ENCODE measurements at regions of chr2 and their contacts with region 1.

Region 1: DNA sequence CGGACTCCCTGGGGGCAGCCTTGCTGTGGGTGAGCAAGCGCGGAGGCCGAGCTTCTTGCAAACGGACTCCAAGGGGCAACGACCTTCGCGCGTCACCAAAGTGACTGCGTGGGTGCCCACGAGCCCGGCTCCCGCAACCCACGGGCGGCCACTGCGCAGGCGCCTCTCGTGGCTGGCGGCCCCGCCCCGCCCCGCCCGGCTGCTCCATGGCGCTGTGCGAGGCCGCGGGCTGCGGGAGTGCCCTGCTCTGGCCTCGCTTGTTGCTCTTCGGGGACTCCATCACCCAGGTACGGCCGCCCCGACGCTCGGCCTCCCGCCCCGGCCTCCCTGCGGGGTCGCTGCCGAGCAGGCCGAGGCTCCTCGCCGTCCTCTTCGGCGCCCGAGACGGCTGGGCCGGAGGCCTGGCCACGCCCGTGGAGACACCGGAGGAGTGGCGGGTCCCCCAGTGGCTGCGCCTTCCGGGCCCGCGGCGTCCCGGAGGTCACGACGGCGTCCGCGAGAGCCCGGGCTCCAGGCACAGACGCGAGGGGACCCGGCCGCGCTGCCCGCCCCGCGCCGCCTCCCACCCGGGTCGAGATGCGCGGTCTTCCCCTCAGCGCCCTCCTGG is at the start of gene IAH1:
- DNase-seq: peak in 8 of 9 donors; percentile 66 to 81 (median 78)
- ATAC-seq: peak; percentile 89
- H3K4me3 ChIP-seq: peak within 1 kb of the TSS; percentile 82
- H3K4me3 Mint-ChIP-seq: peak within 1 kb of the TSS; percentile 81 to 89 (median 84)
- H3K27ac ChIP-seq: peak within 1 kb of the TSS; percentile 95
- H3K27ac Mint-ChIP-seq: peak within 1 kb of the TSS; percentile 83 to 95 (median 88)
- H3K4me1 ChIP-seq: peaks cover 11 to 21% of the 10 kb centered on the region in 2 donors
- H3K4me1 Mint-ChIP-seq: peaks cover 20 to 53% (median 45%) of the 10 kb centered on the region in 7 donors
- H3K27me3 ChIP-seq: no peaks in the 10 kb centered on the region
- H3K27me3 Mint-ChIP-seq: no peaks in the 10 kb centered on the region
- total RNA-seq, gene IAH1: 43.9 to 62.7 (median 49.7) TPM

Region 2: DNA sequence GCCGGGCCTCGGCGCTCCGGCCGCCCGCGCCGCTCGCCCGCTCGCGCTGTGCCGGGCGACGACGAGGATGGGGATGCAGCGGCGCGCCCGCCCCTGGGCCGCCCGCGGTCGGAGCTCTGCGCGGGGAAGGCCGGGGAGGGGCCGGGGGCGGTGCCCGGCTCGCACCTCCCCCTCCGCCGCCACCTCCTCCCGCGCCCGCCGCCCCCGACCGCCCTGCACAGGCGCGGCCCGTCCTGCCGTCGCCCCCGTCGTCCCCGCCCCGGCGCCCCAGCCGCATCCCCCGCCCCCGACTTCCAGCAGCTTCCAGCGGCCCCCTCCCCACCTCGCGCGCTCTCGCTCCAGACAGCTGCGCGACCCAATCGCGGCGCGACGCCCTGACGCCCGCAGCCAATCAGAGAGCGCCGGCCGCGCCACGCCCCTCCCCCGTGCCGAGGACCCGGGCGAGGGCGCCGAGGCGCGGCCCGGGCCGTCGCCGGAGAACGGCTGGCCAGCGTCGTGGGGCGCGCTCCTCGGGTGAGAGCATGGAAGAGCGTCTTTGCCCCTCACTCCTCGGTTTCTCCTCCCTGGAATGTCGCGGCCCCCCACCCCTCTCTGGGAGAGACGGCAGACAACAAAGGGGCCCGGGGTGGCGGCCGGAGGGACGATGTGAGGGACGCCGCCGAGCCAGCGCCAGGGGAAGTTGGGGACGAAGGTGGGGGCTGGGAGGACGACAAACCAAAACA is 470.7 kb before region 1 on chr2 and contains the start of gene MBOAT2:
- CTCF ChIA-PET with region 1: no interaction called
- POLR2A ChIA-PET with region 1: no interaction called
- intact Hi-C with region 1: loop called in 1 of 2 experiments (anchors 5 kb)
- DNase-seq: peak; percentile 60 to 84 (median 71)
- ATAC-seq: peak; percentile 92
- H3K4me3 ChIP-seq: peak within 1 kb of the TSS; percentile 60
- H3K4me3 Mint-ChIP-seq: peak within 1 kb of the TSS; percentile 77 to 92 (median 86)
- H3K27ac ChIP-seq: peak within 1 kb of the TSS; percentile 62
- H3K27ac Mint-ChIP-seq: peak within 1 kb of the TSS in 8 of 9 donors; percentile 56 to 86 (median 76)
- H3K4me1 ChIP-seq: peaks cover 0 to 3% of the 10 kb centered on the region in 2 donors
- H3K4me1 Mint-ChIP-seq: peaks cover 13 to 25% (median 22%) of the 10 kb centered on the region in 7 donors
- H3K27me3 ChIP-seq: peaks cover 0 to 3% of the 10 kb centered on the region in 2 donors
- H3K27me3 Mint-ChIP-seq: peaks cover 0 to 18% (median 4%) of the 10 kb centered on the region in 5 donors
- total RNA-seq, gene MBOAT2: 1.4 to 6.0 (median 2.3) TPM

Region 3: DNA sequence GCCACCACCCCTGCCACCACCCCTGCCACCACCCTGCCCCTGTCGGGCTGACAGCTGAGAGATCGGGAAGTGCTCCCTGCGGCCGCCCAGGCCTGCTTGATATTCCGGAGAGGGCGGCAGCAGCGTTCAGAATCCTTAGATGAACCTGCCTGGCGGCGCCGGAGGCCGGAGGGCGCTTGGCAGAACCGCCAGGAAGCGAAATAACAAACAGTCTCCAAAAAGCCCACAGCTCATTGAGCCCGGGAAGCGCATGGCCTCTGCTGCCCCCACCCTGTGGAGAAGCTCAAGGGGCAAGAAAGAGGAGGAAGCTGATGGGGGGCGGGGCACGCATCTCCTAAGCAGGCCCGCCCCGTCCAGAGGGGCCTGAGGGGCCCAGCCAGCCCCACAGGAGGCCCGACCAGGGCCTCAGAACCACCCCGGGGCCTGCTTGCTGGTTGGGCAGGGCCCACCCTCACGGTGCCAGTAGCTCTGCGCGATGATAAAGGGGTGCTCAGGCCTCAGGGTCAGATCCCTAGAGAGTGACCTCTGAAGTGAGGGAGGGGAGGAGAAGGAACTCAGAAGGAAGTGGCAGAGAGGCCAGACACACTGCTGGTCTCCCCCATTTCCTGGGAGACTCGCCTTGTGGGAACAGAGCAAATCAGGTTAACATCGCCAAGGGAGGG is 378.6 kb before region 1 on chr2:
- CTCF ChIA-PET with region 1: no interaction called
- POLR2A ChIA-PET with region 1: no interaction called
- intact Hi-C with region 1: no loop called
- DNase-seq: no peak
- ATAC-seq: peak; percentile 54
- H3K4me3 ChIP-seq: no peak overlapping the region
- H3K4me3 Mint-ChIP-seq: peak overlapping the region in 1 of 10 donors; percentile 38
- H3K27ac ChIP-seq: no peak overlapping the region
- H3K27ac Mint-ChIP-seq: no peak overlapping the region
- H3K4me1 ChIP-seq: no peaks in the 10 kb centered on the region
- H3K4me1 Mint-ChIP-seq: peaks cover 0 to 15% (median 9%) of the 10 kb centered on the region in 7 donors
- H3K27me3 ChIP-seq: no peaks in the 10 kb centered on the region
- H3K27me3 Mint-ChIP-seq: peaks cover 17 to 40% (median 35%) of the 10 kb centered on the region in 5 donors

Region 4: DNA sequence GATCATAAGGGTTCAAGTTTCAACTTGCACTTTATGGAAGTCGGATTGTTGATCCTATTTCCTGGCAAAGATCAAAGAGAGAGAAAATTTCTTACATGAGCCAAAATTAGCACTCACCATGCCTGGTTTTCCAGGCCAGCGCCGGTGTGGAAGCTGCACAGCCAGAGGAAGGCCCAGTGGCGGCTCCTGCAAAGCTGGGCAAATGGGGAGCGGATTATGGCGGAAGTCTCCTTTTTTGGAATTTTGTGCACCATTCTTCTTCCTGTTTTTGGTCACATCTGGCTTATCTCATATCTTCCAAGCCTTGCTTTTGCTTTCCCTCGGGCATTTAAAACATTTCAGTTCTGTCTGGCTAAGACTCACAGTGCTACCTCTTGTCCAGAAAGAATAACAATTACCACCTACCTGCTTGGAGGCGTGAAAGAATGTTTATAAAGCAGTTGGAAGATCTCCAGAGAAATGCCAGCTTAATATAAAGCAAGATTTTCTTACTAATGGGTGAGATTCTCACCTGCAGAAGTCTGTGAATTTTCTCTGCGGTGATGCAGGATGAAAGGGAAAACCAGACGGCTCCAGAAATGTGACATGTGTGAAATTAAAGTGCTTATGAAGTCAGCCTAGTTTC is 173.5 kb before region 1 on chr2:
- CTCF ChIA-PET with region 1: no interaction called
- POLR2A ChIA-PET with region 1: no interaction called
- intact Hi-C with region 1: no loop called
- DNase-seq: no peak
- ATAC-seq: no peak
- H3K4me3 ChIP-seq: no peak overlapping the region
- H3K4me3 Mint-ChIP-seq: no peak overlapping the region
- H3K27ac ChIP-seq: no peak overlapping the region
- H3K27ac Mint-ChIP-seq: no peak overlapping the region
- H3K4me1 ChIP-seq: no peaks in the 10 kb centered on the region
- H3K4me1 Mint-ChIP-seq: no peaks in the 10 kb centered on the region
- H3K27me3 ChIP-seq: no peaks in the 10 kb centered on the region
- H3K27me3 Mint-ChIP-seq: peaks cover 0 to 11% (median 0%) of the 10 kb centered on the region in 5 donors

Region 5: DNA sequence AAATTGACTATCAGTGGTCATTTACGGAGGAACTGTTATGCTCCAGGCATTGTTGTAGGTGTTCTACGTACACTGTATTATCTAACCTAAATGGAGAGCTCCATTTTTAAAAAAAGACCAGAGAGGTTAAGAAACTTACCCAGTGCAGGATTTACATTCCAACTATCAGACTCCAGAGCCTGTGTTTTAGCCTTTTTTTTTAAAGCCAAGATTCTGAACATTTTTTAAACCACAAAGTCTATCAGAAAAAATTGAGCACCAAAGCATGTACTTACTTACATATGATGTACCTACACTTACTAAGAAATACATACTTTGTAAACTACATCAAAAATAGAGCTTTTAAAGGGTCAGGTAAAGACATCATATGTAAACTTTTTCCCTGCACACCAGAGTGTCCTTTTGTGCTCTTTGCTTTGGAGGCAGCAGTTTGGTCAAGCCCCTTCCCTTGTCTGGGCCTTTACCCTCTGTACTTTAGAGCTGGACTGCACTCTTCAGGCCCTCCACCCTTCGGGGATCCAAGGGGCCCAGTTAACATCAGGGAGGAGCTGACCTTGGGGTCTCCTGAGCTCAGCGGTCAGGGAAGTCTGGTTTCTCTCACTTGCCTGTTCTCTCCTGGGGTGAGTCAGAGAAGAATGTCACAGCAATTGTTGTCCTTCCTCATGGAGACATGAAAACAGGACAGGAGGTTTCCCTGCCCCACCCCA is 109.5 kb before region 1 on chr2:
- CTCF ChIA-PET with region 1: no interaction called
- POLR2A ChIA-PET with region 1: no interaction called
- intact Hi-C with region 1: no loop called
- DNase-seq: no peak
- ATAC-seq: no peak
- H3K4me3 ChIP-seq: no peak overlapping the region
- H3K4me3 Mint-ChIP-seq: no peak overlapping the region
- H3K27ac ChIP-seq: no peak overlapping the region
- H3K27ac Mint-ChIP-seq: peak overlapping the region in 1 of 9 donors; percentile 56
- H3K4me1 ChIP-seq: no peaks in the 10 kb centered on the region
- H3K4me1 Mint-ChIP-seq: no peaks in the 10 kb centered on the region
- H3K27me3 ChIP-seq: no peaks in the 10 kb centered on the region
- H3K27me3 Mint-ChIP-seq: peaks cover 0 to 29% (median 10%) of the 10 kb centered on the region in 5 donors

Region 6: DNA sequence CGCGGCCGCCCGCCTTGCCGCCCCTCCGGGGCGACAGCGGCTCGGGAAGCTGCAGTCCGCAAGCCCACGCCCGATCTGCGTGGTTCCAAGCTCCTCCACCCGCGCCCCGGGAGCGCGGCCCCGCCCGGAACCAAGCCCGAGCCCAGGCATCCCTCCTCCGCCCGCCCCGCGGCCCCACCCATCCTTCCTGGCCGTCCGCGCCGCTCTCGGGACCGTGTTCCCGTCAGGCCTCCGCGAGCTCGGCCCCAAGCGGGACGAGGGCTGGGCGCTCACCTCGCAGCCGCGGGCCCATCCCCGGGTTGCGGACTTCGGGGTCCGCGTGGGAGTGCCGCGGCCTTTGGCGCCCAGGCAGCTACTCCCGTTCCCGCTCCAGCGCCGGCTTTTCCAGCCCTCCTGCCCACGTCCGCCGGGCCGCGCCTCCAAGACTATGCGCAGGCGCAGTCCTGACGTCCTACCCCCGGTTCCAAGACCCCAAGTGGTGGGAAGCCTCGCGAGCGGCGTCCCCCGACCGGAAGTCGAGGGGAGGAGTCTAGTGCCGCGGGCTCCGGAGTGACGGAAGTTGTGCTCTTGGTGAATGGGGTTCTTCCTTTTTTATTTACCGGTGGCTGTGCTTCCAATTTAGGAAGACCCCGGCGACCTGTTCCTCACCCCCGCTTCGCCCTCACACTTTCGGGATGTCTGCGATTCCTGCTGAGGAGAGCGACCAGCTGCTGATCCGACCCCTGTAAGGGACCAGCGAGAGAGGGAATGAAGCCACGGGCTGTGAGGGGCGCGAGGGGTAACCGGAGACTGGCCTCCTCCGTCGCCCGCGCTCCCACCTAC is 51.2 kb before region 1 on chr2 and contains the starts of genes CPSF3 and ITGB1BP1:
- CTCF ChIA-PET with region 1: no interaction called
- POLR2A ChIA-PET with region 1: interaction called, 9 read pairs
- intact Hi-C with region 1: loop called (anchors 1 kb)
- DNase-seq: peak; percentile 88 to 98 (median 94)
- ATAC-seq: peak; percentile 92
- H3K4me3 ChIP-seq: peak within 1 kb of the TSS; percentile 90
- H3K4me3 Mint-ChIP-seq: peak within 1 kb of the TSS in 5 of 10 donors; percentile 87 to 95 (median 92)
- H3K27ac ChIP-seq: peak within 1 kb of the TSS; percentile 84
- H3K27ac Mint-ChIP-seq: peak within 1 kb of the TSS in 8 of 9 donors; percentile 82 to 97 (median 92)
- H3K4me1 ChIP-seq: peaks cover 22 to 24% of the 10 kb centered on the region in 2 donors
- H3K4me1 Mint-ChIP-seq: peaks cover 20 to 41% (median 28%) of the 10 kb centered on the region in 7 donors
- H3K27me3 ChIP-seq: no peaks in the 10 kb centered on the region
- H3K27me3 Mint-ChIP-seq: no peaks in the 10 kb centered on the region
- total RNA-seq, gene CPSF3: 18.0 to 47.8 (median 21.7) TPM
- total RNA-seq, gene ITGB1BP1: 45.1 to 107 (median 54.3) TPM

Region 7: GRCh38 chr2:9488583-9489547 is 14.4 kb after region 1 on chr2:
- CTCF ChIA-PET with region 1: interaction called, 4 read pairs
- POLR2A ChIA-PET with region 1: interaction called, 6 read pairs
- intact Hi-C with region 1: loop called in 1 of 2 experiments (anchors 1 kb)
- DNase-seq: no peak
- ATAC-seq: no peak
- H3K4me3 ChIP-seq: no peak overlapping the region
- H3K4me3 Mint-ChIP-seq: no peak overlapping the region
- H3K27ac ChIP-seq: no peak overlapping the region
- H3K27ac Mint-ChIP-seq: peak overlapping the region in 7 of 9 donors; percentile 9 to 68 (median 52)
- H3K4me1 ChIP-seq: no peaks in the 10 kb centered on the region
- H3K4me1 Mint-ChIP-seq: peaks cover 0 to 8% (median 1%) of the 10 kb centered on the region in 7 donors
- H3K27me3 ChIP-seq: no peaks in the 10 kb centered on the region
- H3K27me3 Mint-ChIP-seq: no peaks in the 10 kb centered on the region

Region 8: GRCh38 chr2:9739531-9739964 is 265.1 kb after region 1 on chr2:
- CTCF ChIA-PET with region 1: no interaction called
- POLR2A ChIA-PET with region 1: no interaction called
- intact Hi-C with region 1: loop called in 1 of 2 experiments (anchors 5 kb)
- DNase-seq: peak in 7 of 9 donors; percentile 18 to 53 (median 36)
- ATAC-seq: peak; percentile 70
- H3K4me3 ChIP-seq: peak overlapping the region; percentile 45
- H3K4me3 Mint-ChIP-seq: peak overlapping the region; percentile 75 to 94 (median 86)
- H3K27ac ChIP-seq: peak overlapping the region; percentile 32
- H3K27ac Mint-ChIP-seq: peak overlapping the region; percentile 77 to 96 (median 92)
- H3K4me1 ChIP-seq: peaks cover 32 to 42% of the 10 kb centered on the region in 2 donors
- H3K4me1 Mint-ChIP-seq: peaks cover 32 to 58% (median 41%) of the 10 kb centered on the region in 7 donors
- H3K27me3 ChIP-seq: no peaks in the 10 kb centered on the region
- H3K27me3 Mint-ChIP-seq: peaks cover 0 to 5% (median 0%) of the 10 kb centered on the region in 5 donors

Region 9: GRCh38 chr2:9843229-9844035 is 369.0 kb after region 1 on chr2 and contains the start of gene TAF1B:
- CTCF ChIA-PET with region 1: no interaction called
- POLR2A ChIA-PET with region 1: interaction called, 3 read pairs
- intact Hi-C with region 1: loop called in 1 of 2 experiments (anchors 2 kb)
- DNase-seq: peak; percentile 55 to 89 (median 80)
- ATAC-seq: peak; percentile 87
- H3K4me3 ChIP-seq: peak within 1 kb of the TSS; percentile 85
- H3K4me3 Mint-ChIP-seq: peak within 1 kb of the TSS; percentile 89 to 95 (median 93)
- H3K27ac ChIP-seq: peak within 1 kb of the TSS; percentile 72
- H3K27ac Mint-ChIP-seq: peak within 1 kb of the TSS; percentile 74 to 97 (median 92)
- H3K4me1 ChIP-seq: peaks cover 11 to 13% of the 10 kb centered on the region in 2 donors
- H3K4me1 Mint-ChIP-seq: peaks cover 25 to 56% (median 48%) of the 10 kb centered on the region in 7 donors
- H3K27me3 ChIP-seq: no peaks in the 10 kb centered on the region
- H3K27me3 Mint-ChIP-seq: peaks cover 0 to 6% (median 0%) of the 10 kb centered on the region in 5 donors
- total RNA-seq, gene TAF1B: 9.2 to 28.2 (median 20.9) TPM